Head of caudate nucleus (tissue), 42 donors: ENCODE measurements at regions of chr7 and their contacts with region 1.

Region 1: GRCh38 chr7:149125863-149126661 is at the start of gene ZNF425:
- DNase-seq: peak; percentile 50 to 96 (median 90)

Region 2: DNA sequence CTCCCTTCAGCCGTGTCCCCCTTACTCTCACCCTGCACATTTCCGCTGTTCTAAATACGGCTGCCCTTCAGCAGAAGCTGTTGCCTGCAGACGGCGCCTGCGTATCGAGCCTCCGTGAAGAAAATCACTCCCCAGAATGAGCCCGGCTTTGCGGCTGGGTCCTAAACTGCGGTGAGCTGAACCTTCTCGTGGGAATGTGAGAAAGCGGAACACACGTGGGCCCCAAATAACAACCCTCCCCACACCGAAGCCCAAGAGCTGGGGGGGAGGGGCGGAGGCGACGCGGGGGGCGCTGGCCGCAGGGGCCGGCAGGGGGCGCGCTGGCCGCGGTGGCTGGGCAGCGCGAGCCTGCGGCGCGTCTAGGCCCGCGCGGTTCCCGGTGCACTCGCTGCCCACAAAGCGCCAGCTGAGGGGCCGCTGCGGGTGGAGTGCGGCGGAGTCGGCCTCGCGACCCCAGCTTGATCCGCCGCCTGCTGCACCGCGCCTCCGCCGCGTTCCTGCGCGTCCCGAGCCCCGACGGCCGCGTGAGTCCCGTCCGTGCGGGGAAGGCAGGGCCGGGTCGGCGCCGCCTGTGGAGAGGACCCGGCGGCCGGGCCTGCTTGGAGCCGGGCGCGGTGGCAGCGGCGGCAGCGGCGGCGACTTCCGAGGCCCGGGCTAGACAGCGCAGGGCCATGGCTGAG is 21.1 kb after region 1 on chr7 and contains the start of gene ZNF398:
- intact Hi-C with region 1: loop called (anchors 1 kb)
- DNase-seq: peak; percentile 57 to 90 (median 80)

Region 3: GRCh38 chr7:149161241-149161848 is 35.3 kb after region 1 on chr7:
- intact Hi-C with region 1: no loop called
- DNase-seq: no peak

Region 4: DNA sequence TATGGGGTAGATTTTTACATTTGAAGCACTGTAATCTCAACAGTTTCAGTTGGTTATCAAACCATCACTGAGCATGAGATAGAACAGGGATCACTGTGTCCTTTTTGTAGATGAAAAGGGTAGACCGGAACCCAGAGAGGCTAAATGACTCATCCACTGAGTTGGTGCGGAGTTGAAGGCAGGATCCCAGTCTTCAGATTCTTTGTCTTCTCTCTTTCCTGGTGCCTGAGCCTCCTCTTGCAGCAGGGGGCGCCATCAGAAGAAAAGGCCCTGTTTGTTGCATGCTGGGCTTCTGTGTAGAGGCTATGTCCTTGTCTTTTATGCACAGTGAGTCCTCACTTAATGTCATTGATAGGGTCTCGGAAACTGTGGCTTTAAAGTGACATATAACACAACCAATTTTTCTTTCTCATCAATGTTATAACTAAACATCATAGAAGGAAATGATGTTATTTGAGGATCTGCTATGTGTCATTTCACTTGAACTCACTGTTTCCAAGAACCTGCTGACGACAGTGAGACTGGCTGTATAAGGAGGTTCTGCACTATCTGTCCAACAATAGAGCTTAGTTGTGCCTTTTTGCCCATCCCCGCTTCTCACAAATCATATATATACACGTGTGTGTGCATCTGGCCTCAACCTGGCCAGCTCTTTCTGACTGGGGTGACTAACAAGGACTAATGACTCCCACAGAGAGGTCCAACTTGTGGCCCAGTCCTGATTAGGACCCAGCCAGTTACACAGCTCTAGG is 83.6 kb after region 1 on chr7:
- intact Hi-C with region 1: no loop called
- DNase-seq: peak in 32 of 42 donors; percentile 10 to 75 (median 42)

Region 5: GRCh38 chr7:149497456-149498261 is 371.6 kb after region 1 on chr7 and contains the start of gene ZNF746:
- intact Hi-C with region 1: loop called (anchors 5 kb)
- DNase-seq: peak in 41 of 42 donors; percentile 44 to 89 (median 78)